ENCODE measurements at regions of chr10 and their contacts with region 1.

Region 1: DNA sequence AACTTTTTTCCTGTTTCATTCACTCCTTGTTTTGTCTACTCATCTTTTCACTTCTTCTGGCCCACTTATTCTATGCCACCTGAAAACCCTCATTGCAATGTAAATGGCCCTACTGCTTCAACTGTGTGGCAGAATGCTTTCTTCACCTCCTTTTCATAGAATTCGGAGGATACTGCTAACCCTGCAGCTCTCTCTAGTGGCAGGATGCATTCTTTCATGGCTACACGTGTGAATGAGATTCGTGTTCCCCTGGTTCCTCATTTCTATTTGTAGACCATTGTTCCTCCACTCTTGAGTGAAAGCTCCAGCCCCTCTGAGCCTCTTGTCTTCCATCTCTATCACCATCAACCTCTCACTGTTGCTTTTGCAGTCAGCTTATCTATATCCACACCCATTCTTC is 20.9 kb upstream of the CYP26C1 start:
- DNase-seq: no peak
- H3K4me3 ChIP-seq: no peak overlapping the region
- H3K27ac ChIP-seq: no peak overlapping the region
- H3K4me1 ChIP-seq: no peaks in the 10 kb centered on the region
- H3K27me3 ChIP-seq: no peaks in the 10 kb centered on the region
- CTCF ChIP-seq: peak; percentile 22

Region 2: DNA sequence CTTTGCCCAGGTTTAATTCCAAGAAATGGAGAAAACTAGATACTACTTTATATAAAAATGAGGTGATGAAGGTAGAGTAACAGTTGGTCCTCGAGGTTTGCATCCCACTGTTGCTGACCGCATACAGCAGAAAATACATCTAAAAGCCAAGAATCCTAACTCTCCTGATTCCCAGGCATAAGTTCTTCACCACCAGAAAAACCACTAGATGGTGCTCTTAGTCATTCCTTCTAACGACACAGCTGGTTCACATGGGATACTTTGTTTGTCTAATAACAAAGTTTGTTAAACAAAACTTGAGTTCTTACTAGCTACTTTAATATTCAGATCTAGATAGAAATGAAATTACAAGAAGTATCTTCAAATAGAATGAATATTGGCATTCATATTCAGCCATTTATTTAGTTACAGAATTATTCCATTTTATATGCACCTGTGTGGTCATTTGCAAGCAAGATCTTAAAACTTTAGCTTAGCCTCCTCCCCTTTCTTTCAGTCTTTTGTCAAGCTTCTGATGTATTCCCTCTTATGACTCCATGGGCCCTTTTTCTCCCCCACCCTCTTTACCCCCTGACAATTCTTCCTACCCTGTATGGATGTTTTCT is 33.2 kb before region 1 on chr10:
- intact Hi-C with region 1: loop called (anchors 5 kb)
- DNase-seq: no peak
- H3K4me3 ChIP-seq: no peak overlapping the region
- H3K27ac ChIP-seq: no peak overlapping the region
- H3K4me1 ChIP-seq: no peaks in the 10 kb centered on the region
- H3K27me3 ChIP-seq: no peaks in the 10 kb centered on the region
- CTCF ChIP-seq: peak; percentile 50

Measured in colonic mucosa (tissue), 4 donors.